Endothelial cell of umbilical vein (primary cell): ENCODE measurements at regions of chr9 and their contacts with region 1.

Region 1: GRCh38 chr9:4297151-4297785 is 2.6 kb downstream of the GLIS3 start:
- DNase-seq: peak; percentile 78
- H3K4me3 ChIP-seq: peak overlapping the region; percentile 53 to 77 (median 75)
- H3K27ac ChIP-seq: peak overlapping the region; percentile 85
- H3K4me1 ChIP-seq: peaks cover 35% of the 10 kb centered on the region
- H3K27me3 ChIP-seq: no peaks in the 10 kb centered on the region
- CTCF ChIP-seq: peak in 1 of 2 donors; percentile 62
- POLR2A ChIP-seq: no peak

Region 2: DNA sequence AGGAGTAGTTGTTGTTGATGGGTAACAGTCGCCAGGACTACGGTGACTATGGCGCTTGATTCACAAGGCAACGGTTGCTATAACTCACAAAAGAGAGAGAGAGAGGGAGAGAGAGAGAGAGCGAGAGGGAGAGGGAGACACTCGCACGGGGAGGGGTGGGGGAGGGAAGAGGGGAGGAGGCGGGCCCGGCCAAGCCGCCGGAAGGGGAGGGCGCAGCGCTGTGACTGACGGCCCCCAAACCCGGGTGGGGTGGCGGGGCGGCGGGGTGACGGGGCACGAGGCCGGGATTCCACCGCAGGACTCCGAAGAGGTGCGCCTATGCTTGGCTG is 771.5 kb before region 1 on chr9 and contains the start of gene RFX3:
- CTCF ChIA-PET with region 1: no interaction called
- POLR2A ChIA-PET with region 1: no interaction called
- dilution Hi-C with region 1: no loop called
- intact Hi-C with region 1: loop called (anchors 2 kb)
- DNase-seq: peak; percentile 90
- H3K4me3 ChIP-seq: peak within 1 kb of the TSS; percentile 63 to 94 (median 79)
- H3K27ac ChIP-seq: peak within 1 kb of the TSS; percentile 98
- H3K4me1 ChIP-seq: peaks cover 16% of the 10 kb centered on the region
- H3K27me3 ChIP-seq: no peaks in the 10 kb centered on the region
- CTCF ChIP-seq: no peak
- POLR2A ChIP-seq: no peak
- total RNA-seq, gene RFX3: 10.5 and 13.7 TPM in 2 replicates

Region 3: GRCh38 chr9:3936520-3937235 is 360.6 kb before region 1 on chr9:
- CTCF ChIA-PET with region 1: no interaction called
- POLR2A ChIA-PET with region 1: no interaction called
- dilution Hi-C with region 1: no loop called
- intact Hi-C with region 1: loop called (anchors 5 kb)
- DNase-seq: peak; percentile 93
- H3K4me3 ChIP-seq: no peak overlapping the region
- H3K27ac ChIP-seq: peak overlapping the region; percentile 39
- H3K4me1 ChIP-seq: peaks cover 9% of the 10 kb centered on the region
- H3K27me3 ChIP-seq: peaks cover 0 to 3% of the 10 kb centered on the region in 2 experiments
- CTCF ChIP-seq: no peak
- POLR2A ChIP-seq: no peak

Region 4: DNA sequence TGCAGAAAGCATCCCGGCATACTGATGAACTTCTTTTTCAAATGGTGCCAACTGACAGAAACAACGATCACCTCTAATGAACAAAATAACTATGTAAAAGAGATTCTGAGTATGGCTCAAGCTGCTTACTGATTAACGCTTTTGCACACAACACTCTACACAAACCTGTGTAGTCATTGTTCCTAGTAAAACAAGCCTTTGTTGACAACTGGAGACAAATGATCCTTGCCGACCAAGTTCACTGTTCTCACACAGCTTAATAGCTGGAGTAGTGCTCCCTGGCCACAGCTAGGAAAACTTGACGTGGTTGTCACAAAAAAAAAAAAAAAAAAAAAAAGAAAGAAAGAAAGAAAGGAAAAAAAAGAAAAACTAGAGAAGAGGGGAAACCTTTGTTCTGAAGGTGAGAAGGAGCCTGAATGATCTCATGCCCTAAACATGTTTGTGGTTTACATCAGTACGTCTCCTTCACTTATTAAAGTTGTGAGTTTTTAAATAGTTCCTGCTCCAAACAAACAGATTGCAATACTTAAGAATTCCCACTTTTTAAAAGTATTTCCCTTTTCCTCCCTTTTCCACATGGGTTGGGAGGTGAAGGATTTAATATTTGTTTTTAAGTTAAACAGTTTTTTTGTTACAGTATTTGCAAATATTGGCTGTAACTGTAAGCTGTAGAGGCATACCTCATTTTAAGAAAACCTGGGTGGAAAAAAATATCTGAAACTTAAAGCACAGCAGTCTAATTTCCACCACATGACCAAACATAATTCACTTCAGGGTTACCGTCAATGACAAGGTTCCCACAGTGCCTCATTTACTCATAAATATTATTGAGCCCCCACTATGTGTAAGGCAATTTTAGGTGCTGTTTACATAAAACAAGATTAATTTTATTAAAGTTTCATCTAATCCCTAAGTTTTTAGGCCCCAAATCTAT is 61.1 kb before region 1 on chr9:
- CTCF ChIA-PET with region 1: no interaction called
- POLR2A ChIA-PET with region 1: no interaction called
- dilution Hi-C with region 1: no loop called
- intact Hi-C with region 1: loop called (anchors 2 kb)
- DNase-seq: no peak
- H3K4me3 ChIP-seq: no peak overlapping the region
- H3K27ac ChIP-seq: no peak overlapping the region
- H3K4me1 ChIP-seq: peaks cover 9% of the 10 kb centered on the region
- H3K27me3 ChIP-seq: peaks cover 0 to 2% of the 10 kb centered on the region in 2 experiments
- CTCF ChIP-seq: no peak
- POLR2A ChIP-seq: no peak

Region 5: GRCh38 chr9:4315582-4316215 is 18.4 kb after region 1 on chr9:
- CTCF ChIA-PET with region 1: interaction called, 16 read pairs
- POLR2A ChIA-PET with region 1: no interaction called
- dilution Hi-C with region 1: no loop called
- intact Hi-C with region 1: no loop called
- DNase-seq: peak; percentile 85
- H3K4me3 ChIP-seq: no peak overlapping the region
- H3K27ac ChIP-seq: no peak overlapping the region
- H3K4me1 ChIP-seq: peaks cover 4% of the 10 kb centered on the region
- H3K27me3 ChIP-seq: no peaks in the 10 kb centered on the region
- CTCF ChIP-seq: peak; percentile 89 to 93
- POLR2A ChIP-seq: no peak

Region 6: GRCh38 chr9:4555251-4555650 is 258.0 kb after region 1 on chr9:
- CTCF ChIA-PET with region 1: no interaction called
- POLR2A ChIA-PET with region 1: no interaction called
- dilution Hi-C with region 1: no loop called
- intact Hi-C with region 1: loop called (anchors 10 kb)
- DNase-seq: peak; percentile 91
- H3K4me3 ChIP-seq: no peak overlapping the region
- H3K27ac ChIP-seq: peak overlapping the region; percentile 86
- H3K4me1 ChIP-seq: peaks cover 23% of the 10 kb centered on the region
- H3K27me3 ChIP-seq: no peaks in the 10 kb centered on the region
- CTCF ChIP-seq: no peak
- POLR2A ChIP-seq: no peak